A673 (cell line): ENCODE measurements at regions of chr4 and their contacts with region 1.

Region 1: DNA sequence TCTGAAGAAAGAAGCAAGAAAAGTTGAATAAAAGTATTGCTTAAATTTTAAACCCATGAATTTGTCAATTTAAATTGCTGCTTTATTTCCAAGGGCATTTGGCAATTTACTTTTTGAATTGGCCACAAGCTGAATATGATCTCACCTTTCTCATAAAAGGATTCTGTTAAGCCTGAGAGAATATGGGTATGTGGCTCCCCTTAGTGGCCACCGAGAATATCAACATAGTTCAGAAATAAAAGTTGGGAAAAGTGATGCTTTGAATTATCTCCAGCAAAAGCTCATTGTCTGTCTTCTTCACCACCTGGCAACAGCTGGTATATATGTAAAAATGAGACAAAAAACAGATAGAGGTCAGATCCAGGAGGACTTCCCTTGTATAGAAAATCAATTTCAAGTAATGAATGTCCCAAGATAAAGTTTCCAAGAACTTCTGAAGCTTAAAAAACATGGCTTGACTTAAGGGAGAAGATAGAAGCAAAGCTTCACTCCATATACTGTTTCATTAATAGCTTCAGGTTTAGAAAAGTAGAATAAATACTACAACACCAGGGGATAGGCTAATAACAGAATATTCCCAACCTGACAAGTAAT is 290.7 kb upstream of the FAM241A start:
- DNase-seq: peak; percentile 48
- H3K4me3 ChIP-seq: no peak overlapping the region
- H3K27ac ChIP-seq: no peak overlapping the region
- H3K4me1 ChIP-seq: no peaks in the 10 kb centered on the region
- H3K27me3 ChIP-seq: no peaks in the 10 kb centered on the region
- CTCF ChIP-seq: peak; percentile 76

Region 2: DNA sequence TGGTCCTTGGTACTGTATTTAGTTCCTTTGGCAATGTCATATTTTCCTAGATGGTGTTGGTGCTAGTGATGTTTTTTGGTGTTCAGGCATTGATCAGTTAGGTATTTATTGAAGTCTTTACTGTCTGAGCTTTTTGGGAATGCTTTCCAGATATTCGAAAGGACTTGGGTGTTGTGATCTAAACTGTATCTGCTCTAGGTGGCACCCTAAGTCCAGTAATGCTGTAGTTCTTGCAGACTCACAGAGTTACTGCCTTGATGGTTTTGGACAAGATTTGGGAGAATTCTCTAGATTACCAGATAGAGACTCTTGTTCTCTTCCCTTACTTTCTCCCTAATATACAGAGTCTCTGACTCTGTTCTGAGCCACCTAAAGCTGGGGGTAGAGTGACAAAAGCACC is 718.2 kb before region 1 on chr4:
- CTCF ChIA-PET with region 1: interaction called, 4 read pairs
- POLR2A ChIA-PET with region 1: no interaction called
- intact Hi-C with region 1: loop called (anchors 10 kb)
- DNase-seq: peak; percentile 45
- H3K4me3 ChIP-seq: no peak overlapping the region
- H3K27ac ChIP-seq: no peak overlapping the region
- H3K4me1 ChIP-seq: no peaks in the 10 kb centered on the region
- H3K27me3 ChIP-seq: no peaks in the 10 kb centered on the region
- CTCF ChIP-seq: peak; percentile 45

Region 3: GRCh38 chr4:111628437-111628836 is 226.2 kb before region 1 on chr4:
- CTCF ChIA-PET with region 1: no interaction called
- POLR2A ChIA-PET with region 1: no interaction called
- intact Hi-C with region 1: no loop called
- DNase-seq: peak; percentile 94
- H3K4me3 ChIP-seq: no peak overlapping the region
- H3K27ac ChIP-seq: peak overlapping the region; percentile 32
- H3K4me1 ChIP-seq: peaks cover 32% of the 10 kb centered on the region
- H3K27me3 ChIP-seq: no peaks in the 10 kb centered on the region
- CTCF ChIP-seq: no peak